ENCODE measurements at regions of chr2 and their contacts with region 1.

Region 1: GRCh38 chr2:225002039-225002655 is 40.1 kb downstream of the DOCK10 start:
- DNase-seq: peak; percentile 54
- H3K4me3 Mint-ChIP-seq: no peak overlapping the region
- H3K27ac Mint-ChIP-seq: peak overlapping the region; percentile 77
- H3K4me1 Mint-ChIP-seq: peaks cover 70% of the 10 kb centered on the region
- H3K27me3 Mint-ChIP-seq: no peaks in the 10 kb centered on the region

Region 2: GRCh38 chr2:224802407-224802806 is 199.7 kb before region 1 on chr2:
- intact Hi-C with region 1: loop called (anchors 10 kb)
- DNase-seq: no peak
- H3K4me3 Mint-ChIP-seq: no peak overlapping the region
- H3K27ac Mint-ChIP-seq: no peak overlapping the region
- H3K4me1 Mint-ChIP-seq: no peaks in the 10 kb centered on the region
- H3K27me3 Mint-ChIP-seq: no peaks in the 10 kb centered on the region

Region 3: DNA sequence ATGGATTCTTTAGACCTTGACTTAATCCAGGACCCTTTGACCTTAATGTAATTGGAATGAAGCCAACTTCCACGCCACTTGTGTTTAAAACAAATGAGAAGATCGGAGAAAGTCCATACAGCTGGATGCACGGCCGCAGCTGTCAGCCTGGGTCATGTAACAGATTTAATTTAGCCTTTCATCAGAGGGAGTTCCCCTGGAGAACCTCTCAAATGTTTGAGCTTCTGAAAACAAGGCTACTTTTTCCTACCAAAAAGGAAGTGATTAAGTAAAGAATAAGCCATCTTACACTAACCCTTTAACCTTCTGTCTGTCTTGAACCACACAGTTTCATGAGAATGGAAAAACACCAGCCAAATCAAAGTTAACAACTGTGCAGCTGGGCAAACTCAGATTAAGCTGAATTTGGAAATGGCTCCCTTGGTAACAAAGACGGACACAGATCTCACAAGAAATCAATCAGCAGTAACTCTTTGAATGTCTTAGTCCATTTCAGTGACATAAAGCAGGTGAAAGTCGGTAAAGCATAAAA is 63.4 kb before region 1 on chr2:
- intact Hi-C with region 1: loop called (anchors 2 kb)
- DNase-seq: no peak
- H3K4me3 Mint-ChIP-seq: peak overlapping the region; percentile 62
- H3K27ac Mint-ChIP-seq: peak overlapping the region; percentile 80
- H3K4me1 Mint-ChIP-seq: peaks cover 74% of the 10 kb centered on the region
- H3K27me3 Mint-ChIP-seq: no peaks in the 10 kb centered on the region

Region 4: GRCh38 chr2:224982910-224983711 is 19.0 kb before region 1 on chr2:
- intact Hi-C with region 1: loop called (anchors 1 kb)
- DNase-seq: no peak
- H3K4me3 Mint-ChIP-seq: peak overlapping the region; percentile 37
- H3K27ac Mint-ChIP-seq: peak overlapping the region; percentile 90
- H3K4me1 Mint-ChIP-seq: peaks cover 62% of the 10 kb centered on the region
- H3K27me3 Mint-ChIP-seq: no peaks in the 10 kb centered on the region

Measured in activated T-helper 2 cell treated with anti-CD3 and anti-CD28 coated beads, Interferon-gamma antibody, Interleukin-2, Interleukin-4, amounts not matched to agents 10 μg/mL and 5 μg/mL and 100 μg/mL, durations not matched to agents 14 hours and 24 hours and 36 hours (primary cell).